ENCODE measurements at regions of chr19 and their contacts with region 1.

Region 1: DNA sequence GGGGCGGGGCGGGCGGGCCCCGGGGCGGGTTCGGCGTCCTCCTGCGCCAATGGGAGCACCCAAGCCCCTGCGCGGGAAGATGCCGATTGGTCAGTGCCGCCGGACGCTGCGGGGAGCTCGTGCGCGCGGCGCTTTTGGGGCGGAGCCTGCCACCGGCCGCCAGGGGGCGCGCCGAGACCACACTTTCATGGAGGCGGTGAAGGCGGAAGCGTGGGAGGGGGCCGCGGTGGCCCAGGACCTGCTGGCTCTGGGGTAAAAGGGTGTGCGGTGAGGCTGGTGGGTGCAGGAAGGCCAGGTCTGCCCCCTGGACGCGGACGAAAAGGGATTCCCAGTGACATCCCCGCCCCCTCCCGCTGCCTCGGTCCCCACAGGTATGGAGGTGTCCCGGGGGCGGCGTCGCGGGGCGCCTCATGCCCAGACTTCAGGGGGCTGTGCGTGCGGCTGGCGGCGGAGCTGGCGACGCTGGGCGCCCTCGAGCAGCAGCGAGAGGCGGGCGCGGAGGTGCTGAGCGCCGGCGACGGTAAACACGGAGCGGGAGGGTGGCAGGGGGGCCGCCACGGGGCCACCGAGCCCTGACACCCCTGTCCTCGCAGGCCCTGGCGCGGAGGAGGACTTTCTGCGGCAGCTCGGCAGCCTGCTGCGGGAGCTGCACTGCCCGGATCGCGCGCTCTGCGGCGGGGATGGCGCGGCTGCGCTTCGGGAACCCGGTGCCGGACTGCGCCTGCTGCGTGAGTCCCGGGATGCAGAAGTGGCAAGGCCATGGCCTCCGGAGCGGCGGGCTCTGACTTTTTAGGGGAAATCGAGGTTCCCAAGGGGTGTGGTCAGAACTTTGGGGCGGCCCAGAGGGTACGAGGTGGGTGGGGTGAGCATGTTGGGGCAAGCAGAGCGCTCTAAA is at the start of gene FAM98C:
- DNase-seq: peak; percentile 98
- H3K4me3 Mint-ChIP-seq: peak within 1 kb of the TSS; percentile 89
- H3K27ac Mint-ChIP-seq: peak within 1 kb of the TSS; percentile 94
- H3K4me1 Mint-ChIP-seq: peaks cover 21% of the 10 kb centered on the region
- H3K27me3 Mint-ChIP-seq: no peaks in the 10 kb centered on the region
- total RNA-seq, gene FAM98C: 26.6 and 27.5 TPM in 2 replicates

Region 2: DNA sequence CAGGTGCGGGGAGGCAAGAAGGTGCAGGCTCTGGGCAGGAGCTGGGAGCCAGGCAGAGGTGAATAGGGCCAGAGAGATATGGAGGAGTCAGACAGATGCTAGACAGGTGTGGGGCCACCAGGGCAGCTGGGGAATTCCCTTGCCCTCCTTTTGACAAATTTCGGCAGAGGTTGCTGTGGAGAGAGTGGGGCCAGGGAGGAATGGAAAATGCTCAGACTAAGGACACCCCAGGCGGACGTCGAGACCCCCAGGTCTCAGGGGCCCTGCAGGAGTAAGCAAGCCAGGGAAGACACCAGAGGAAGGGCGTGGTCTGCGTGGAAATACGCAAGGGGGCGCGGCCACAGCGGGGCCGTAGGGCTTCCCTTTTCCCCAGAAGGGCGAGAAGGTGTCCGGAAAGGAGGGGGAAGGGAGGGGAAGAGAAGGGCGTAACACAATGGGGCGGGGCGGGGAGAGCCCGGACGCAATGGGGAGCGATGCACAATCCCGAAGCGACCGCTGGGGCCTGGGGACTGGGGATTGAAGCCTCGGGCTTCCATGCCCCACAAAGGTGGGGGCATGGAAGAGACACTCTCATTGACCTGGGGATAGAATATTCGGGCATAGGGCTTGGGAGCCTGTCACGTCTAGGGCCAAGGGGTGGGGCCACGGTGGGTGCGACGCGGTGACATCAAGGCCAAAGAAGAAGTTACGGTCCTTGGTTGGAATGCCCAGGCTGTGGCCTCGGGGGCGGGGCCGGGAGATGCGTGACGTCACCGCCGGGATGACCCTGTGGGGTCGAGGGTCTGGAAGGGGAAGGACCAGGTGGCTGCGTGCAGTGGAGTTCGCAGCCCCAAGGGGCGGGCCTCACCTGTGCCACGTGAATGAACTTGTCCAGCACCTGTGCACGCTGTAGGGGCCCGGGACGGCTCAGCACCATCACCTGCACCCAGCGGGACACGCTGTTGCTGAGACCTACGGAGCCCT is 14.6 kb after region 1 on chr19:
- intact Hi-C with region 1: loop called (anchors 1 kb)
- DNase-seq: peak; percentile 68
- H3K4me3 Mint-ChIP-seq: peak overlapping the region; percentile 84
- H3K27ac Mint-ChIP-seq: peak overlapping the region; percentile 80
- H3K4me1 Mint-ChIP-seq: peaks cover 26% of the 10 kb centered on the region
- H3K27me3 Mint-ChIP-seq: no peaks in the 10 kb centered on the region

Region 3: DNA sequence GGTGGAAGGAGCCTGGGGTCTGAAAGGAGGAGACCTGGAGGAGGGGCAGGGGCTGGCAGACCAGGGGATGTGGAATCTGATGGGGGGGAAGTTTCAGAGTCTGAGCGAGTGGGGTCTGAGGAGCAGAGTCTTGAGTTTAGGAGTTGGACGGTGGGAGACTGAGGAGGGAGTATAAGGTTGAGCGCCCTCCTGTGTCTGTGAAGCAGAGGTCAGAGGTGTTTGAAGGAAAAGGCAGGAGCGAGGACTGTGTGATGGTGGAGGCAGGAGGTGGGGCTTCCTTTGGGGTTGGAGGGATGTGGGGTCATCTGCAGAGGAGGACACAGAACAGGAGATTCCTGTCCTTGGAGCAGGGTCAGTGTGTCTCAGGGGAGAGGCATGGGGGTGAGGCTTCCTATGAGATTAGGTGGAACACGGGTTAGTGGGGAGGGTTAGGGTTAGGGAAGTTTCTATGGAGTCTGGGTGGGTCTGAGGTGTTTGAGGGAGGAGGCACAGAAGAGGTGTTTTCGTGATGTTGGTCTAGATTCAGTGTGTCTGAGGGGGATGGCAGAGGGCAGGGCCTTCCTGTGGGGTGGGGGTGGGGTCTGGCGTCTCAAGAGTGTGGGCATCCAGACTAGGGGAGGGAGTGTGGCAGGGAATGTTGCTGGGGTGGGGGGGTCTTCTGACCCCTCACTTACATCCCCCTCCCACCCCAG is 38.6 kb after region 1 on chr19:
- intact Hi-C with region 1: loop called (anchors 2 kb)
- DNase-seq: no peak
- H3K4me3 Mint-ChIP-seq: no peak overlapping the region
- H3K27ac Mint-ChIP-seq: no peak overlapping the region
- H3K4me1 Mint-ChIP-seq: no peaks in the 10 kb centered on the region
- H3K27me3 Mint-ChIP-seq: peaks cover 3% of the 10 kb centered on the region

Region 4: DNA sequence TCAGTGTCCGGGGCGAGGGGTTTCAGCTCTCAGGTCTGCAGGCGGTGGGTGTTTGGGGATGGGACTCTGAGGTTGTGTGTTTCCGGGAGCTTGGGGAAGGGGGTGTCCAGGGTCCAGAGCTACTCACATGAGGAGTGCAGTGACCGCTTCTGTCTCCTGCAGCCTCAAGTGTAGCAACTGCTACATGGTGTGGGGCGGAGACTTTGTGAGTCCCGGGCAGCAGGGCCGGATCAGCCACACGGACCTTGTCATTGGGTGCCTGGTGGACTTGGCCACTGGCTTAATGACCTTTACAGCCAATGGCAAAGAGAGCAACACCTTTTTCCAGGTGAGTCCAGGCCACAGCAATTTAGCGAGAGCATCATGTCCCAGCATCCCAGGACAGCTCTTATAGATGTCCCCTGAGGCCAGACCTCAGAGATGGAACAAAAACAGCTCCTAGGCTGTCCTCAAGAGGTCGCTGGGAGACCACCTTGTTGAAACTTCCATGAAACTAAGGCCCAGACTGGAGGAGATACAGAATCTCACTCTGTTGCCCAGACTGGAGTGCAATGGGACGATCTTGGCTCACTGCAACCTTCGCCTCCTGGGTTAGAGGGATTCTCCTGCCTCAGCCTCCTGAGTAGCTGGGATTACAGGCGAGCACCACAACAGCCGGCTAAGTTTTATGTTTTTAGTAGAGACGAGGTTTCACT is 75.2 kb after region 1 on chr19:
- intact Hi-C with region 1: no loop called
- DNase-seq: no peak
- H3K4me3 Mint-ChIP-seq: no peak overlapping the region
- H3K27ac Mint-ChIP-seq: no peak overlapping the region
- H3K4me1 Mint-ChIP-seq: no peaks in the 10 kb centered on the region
- H3K27me3 Mint-ChIP-seq: no peaks in the 10 kb centered on the region

Region 5: GRCh38 chr19:38514812-38515633 is 111.8 kb after region 1 on chr19:
- intact Hi-C with region 1: loop called (anchors 1 kb)
- DNase-seq: peak; percentile 69
- H3K4me3 Mint-ChIP-seq: no peak overlapping the region
- H3K27ac Mint-ChIP-seq: no peak overlapping the region
- H3K4me1 Mint-ChIP-seq: peaks cover 21% of the 10 kb centered on the region
- H3K27me3 Mint-ChIP-seq: peaks cover 9% of the 10 kb centered on the region